H1 (cell line): ENCODE measurements at regions of chr2 and their contacts with region 1.

Region 1: DNA sequence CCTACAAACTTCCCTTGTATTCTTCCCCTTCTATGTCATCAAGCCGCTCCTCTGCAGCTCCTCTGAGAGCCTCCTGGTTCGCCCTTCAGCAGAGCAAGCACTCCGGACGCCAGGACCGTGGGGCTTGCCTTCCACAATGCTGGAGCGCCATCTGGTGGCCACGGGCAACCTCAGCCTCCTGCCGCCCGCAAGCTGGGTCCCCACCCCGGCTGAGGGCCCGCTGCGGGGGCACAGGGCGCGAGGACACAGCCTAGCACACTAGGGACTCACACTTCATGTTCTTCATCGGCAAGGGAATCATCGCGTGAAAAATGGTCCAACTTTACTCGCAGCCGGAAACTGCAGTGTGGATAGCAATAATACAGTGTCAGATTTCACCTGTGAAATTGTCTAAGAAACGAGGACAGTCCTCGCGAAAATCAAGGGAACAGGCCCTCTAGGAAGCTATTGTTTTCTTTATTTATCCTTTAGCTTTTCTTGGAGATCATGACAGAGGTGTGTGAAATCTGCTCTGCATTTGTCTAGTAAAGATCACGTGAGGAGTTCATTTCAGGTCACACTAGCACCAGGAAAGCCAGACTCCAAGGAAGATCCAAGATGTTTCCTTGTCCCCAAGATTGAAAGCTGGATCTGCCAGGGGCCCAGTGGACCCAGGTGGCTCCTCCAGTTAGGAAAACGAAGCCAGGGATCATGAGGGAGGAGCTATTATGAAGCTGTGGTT is 5.8 kb downstream of the PRLH start:
- DNase-seq: peak; percentile 83 to 98
- H3K4me3 ChIP-seq: no peak overlapping the region
- H3K27ac ChIP-seq: no peak overlapping the region
- H3K4me1 ChIP-seq: peaks cover 0 to 8% (median 4%) of the 10 kb centered on the region in 4 experiments; a peak in 3 of 7 replicates
- H3K27me3 ChIP-seq: no peaks in the 10 kb centered on the region
- CTCF ChIP-seq: peak; percentile 98 to 99 (median 98)
- EP300 ChIP-seq: 0 out of 3 replicates have a peak, but pooled peaks of 1 of the 2 experiments have one; percentile 14
- POLR2A ChIP-seq: no peak
- RAD21 ChIP-seq: peak; percentile 99 to 100

Region 2: DNA sequence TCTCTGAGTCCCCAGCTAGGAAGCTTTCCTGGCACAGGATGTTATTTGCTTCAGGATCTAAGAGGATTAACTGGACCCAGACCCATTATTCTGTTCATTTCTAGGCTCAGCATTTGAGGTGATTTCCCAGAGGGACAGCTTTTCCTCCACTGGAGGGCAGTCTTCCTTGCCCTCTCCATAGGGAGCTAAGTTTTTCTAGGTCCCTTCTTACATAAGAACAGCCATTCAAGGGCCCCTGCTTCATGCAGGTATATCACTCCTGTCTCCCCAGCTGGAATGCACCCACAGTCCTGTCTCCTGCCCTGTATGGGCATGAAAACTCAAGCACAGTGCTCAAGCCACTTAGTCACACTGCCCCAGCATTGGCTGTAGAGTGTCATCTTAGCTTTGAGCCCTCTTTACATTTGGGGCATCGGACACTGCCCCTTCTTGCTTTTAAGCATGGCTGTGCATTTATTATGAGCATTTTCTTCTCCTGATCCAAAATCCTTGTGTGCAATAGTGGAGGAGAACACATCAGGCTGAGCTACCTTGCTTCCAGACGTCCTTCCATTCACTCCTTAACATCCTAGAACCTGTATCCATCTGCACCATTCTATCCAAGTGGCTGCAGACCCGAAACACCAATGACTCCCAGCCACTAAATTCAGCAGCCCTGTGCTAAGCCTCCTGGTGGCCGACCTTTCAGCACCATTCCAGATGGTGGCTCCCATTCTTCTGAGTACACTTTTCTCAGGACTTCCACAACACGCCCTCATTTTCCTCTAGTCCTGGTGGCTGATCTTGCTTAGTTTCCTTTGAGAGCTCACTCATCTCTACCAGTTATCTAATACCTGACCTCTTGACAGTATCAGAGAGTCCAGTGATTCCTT is 406.5 kb before region 1 on chr2:
- CTCF ChIA-PET with region 1: interaction called, 12 read pairs
- POLR2A ChIA-PET with region 1: no interaction called
- DNase-seq: peak in 1 of 2 experiments; percentile 63
- H3K4me3 ChIP-seq: no peak overlapping the region
- H3K27ac ChIP-seq: no peak overlapping the region
- H3K4me1 ChIP-seq: no peaks in the 10 kb centered on the region
- H3K27me3 ChIP-seq: no peaks in the 10 kb centered on the region
- CTCF ChIP-seq: peak; percentile 32 to 85 (median 83)
- EP300 ChIP-seq: no peak
- POLR2A ChIP-seq: no peak
- RAD21 ChIP-seq: peak; percentile 78 to 85

Region 3: DNA sequence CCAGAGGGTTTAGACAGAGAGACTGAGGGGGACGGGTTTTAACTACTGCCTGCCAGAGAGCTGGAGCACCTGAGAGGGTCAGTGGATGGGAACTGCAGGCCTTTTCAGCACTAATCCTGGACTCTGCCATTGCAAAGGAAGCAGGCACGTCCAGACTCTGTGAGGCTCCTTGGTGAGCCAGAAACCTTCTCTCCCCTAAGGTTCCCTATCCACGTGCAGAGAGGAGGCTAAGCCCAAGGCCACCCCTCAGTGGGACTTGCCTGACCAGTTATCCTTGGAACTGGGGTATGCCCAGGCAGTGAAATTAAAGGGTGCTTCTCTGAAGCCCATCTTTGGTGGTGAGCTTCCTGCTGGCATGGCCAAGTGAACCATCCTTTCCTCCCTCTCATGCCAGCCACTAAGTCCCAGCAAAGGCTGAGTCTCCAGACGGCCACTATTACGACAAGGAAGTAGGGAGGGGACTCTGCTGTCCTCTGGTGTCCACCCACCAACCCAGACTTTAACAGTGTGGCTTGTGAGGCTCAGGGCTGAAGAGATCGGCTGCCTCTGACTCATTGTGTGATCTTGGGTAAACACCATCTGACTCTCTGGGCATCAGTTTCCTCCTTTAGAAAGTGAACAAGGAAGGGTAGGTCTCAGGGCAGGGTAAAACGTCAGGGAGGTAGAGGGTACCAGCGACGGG is 89.0 kb before region 1 on chr2:
- CTCF ChIA-PET with region 1: interaction called, 19 read pairs
- POLR2A ChIA-PET with region 1: no interaction called
- DNase-seq: no peak
- H3K4me3 ChIP-seq: no peak overlapping the region
- H3K27ac ChIP-seq: no peak overlapping the region
- H3K4me1 ChIP-seq: peaks cover 0 to 14% (median 8%) of the 10 kb centered on the region in 4 experiments; a peak in 6 of 7 replicates
- H3K27me3 ChIP-seq: peaks cover 6 to 33% (median 24%) of the 10 kb centered on the region in 4 experiments; a peak in 6 of 7 replicates
- CTCF ChIP-seq: no peak
- EP300 ChIP-seq: no peak
- POLR2A ChIP-seq: no peak
- RAD21 ChIP-seq: no peak

Region 4: DNA sequence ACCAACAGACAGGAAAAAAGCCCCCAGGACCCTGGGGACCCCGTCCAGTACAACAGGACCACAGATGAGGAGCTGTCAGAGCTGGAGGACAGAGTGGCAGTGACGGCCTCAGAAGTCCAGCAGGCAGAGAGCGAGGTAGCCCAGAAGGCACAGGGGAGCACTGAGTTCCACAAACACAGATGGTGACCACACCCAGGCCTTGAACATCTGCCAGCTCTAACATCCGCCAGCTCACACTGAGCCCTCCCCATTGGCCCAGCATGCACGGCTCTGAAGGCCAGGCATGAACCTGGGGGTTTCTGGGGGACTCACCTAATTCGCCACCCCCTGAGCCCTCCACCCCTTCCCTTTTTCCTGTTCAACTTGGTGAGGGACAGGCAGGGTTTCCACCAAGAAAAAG is 31.4 kb before region 1 on chr2:
- CTCF ChIA-PET with region 1: interaction called, 12 read pairs
- POLR2A ChIA-PET with region 1: interaction called, 4 read pairs
- DNase-seq: no peak
- H3K4me3 ChIP-seq: no peak overlapping the region
- H3K27ac ChIP-seq: no peak overlapping the region
- H3K4me1 ChIP-seq: no peaks in the 10 kb centered on the region; a peak in 1 of 7 replicates
- H3K27me3 ChIP-seq: no peaks in the 10 kb centered on the region
- CTCF ChIP-seq: no peak
- EP300 ChIP-seq: no peak
- POLR2A ChIP-seq: no peak
- RAD21 ChIP-seq: no peak

Region 5: DNA sequence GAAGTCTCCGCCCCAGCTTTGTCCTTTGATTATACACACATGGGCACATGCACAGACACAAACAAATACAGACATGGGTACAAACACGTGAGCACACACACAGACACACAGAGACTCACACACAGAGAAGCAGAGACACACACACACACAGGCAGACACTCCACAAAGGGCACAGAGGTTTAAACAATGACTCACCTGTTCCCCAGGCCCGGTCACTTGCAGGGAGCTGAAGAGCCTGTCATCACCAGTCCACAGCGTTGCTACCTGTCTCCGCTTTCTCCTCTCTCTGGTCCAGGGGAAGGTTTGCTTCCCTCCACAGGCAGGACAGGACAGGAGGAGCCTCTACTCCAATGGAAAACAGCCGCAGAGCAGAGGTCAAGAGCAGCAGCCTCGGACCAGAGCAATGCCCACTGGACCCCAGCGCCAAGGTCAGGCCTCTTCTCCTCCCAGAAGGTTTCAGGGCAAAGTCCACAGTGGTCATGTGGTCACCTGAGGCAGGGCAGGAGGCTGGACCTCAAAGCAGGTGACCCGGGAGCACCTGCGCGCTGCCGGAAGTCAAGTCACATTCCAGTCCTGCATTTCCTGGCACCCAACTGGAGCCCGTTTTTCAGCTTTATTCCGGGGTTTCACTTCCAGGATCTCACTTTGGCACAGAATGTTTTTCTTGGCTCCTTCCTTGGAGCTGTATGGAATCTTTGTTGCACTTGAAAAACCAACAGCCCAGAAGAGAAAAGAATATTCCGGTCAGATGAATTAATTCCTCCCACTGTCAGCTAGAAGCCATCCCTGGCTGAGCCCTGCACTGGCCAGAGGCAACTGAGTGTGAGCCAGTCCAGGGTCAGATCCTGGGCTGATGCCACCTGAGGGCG is 18.3 kb after region 1 on chr2 and contains the start of gene RAB17:
- CTCF ChIA-PET with region 1: interaction called, 14 read pairs
- POLR2A ChIA-PET with region 1: interaction called, 27 read pairs
- DNase-seq: no peak
- H3K4me3 ChIP-seq: peak within 1 kb of the TSS; percentile 45 to 59 (median 58)
- H3K27ac ChIP-seq: peak within 1 kb of the TSS; percentile 25; the same call in 1 of the 2 replicates
- H3K4me1 ChIP-seq: peaks cover 19 to 62% (median 33%) of the 10 kb centered on the region in 4 experiments
- H3K27me3 ChIP-seq: no peaks in the 10 kb centered on the region
- CTCF ChIP-seq: no peak
- EP300 ChIP-seq: no peak
- POLR2A ChIP-seq: peak in 1 of 2 experiments; percentile 45; a peak in 1 of 3 replicates
- RAD21 ChIP-seq: no peak
- total RNA-seq, gene RAB17: 83.4 and 83.8 TPM in 2 replicates